OCI-LY7 (cell line): ENCODE measurements at regions of chr1 and their contacts with region 1.

Region 1: GRCh38 chr1:212035123-212035834 is at the starts of genes DTL and INTS7:
- DNase-seq: peak; percentile 100
- H3K4me3 ChIP-seq: peak within 1 kb of the TSS; percentile 82
- H3K27ac ChIP-seq: peak within 1 kb of the TSS; percentile 80
- H3K4me1 ChIP-seq: peaks cover 63% of the 10 kb centered on the region
- CTCF ChIP-seq: peak; percentile 90
- total RNA-seq, gene DTL: 64.4 and 71.5 TPM in 2 replicates
- total RNA-seq, gene INTS7: 16.7 and 17.8 TPM in 2 replicates

Region 2: DNA sequence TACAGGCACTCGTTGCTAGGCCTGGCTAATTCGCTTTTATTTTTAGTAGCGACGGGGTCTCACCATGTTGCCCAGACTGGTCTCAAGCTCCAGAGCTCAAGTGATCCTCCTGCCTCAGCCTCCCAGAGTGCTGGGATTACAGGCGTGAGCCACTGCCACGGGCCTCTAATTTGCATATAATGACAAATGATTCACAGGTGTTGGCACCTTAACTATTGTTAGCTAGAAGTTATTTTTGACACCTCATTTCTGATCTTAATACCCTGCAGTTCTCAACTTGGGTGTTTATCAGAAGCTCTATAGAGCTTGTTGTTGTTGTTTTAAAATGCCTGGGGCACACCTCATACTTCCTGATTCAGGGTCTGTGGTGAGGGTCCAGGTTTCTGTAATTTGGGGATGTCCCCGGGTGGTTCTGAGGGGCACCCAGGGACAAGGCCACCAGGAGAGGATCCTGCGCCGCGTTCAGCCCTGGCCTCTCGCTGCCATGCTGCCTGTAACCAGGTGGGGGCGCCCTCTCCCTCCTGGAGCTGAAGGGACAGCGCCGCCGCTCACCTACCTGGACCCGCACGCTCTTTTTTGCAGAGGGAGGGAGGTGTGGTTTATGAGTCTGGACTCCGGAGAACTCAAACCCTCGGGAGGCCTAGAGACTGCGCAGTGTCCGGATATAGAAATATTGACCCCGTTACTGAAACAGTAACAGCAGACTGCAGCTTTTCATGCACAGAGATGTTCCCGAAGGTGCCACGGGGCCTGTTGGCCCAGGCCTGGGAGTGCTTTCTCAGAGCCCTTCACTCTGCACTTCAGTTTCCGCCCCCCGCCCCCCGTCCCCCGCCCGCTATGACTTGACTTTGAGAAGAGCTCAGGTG is 336.9 kb before region 1 on chr1:
- CTCF ChIA-PET with region 1: interaction called, 9 read pairs
- POLR2A ChIA-PET with region 1: interaction called, 5 read pairs
- intact Hi-C with region 1: loop called (anchors 2 kb)
- DNase-seq: peak; percentile 75
- H3K4me3 ChIP-seq: peak overlapping the region; percentile 30
- H3K27ac ChIP-seq: peak overlapping the region; percentile 22
- H3K4me1 ChIP-seq: peaks cover 42% of the 10 kb centered on the region
- CTCF ChIP-seq: peak; percentile 99

Region 3: DNA sequence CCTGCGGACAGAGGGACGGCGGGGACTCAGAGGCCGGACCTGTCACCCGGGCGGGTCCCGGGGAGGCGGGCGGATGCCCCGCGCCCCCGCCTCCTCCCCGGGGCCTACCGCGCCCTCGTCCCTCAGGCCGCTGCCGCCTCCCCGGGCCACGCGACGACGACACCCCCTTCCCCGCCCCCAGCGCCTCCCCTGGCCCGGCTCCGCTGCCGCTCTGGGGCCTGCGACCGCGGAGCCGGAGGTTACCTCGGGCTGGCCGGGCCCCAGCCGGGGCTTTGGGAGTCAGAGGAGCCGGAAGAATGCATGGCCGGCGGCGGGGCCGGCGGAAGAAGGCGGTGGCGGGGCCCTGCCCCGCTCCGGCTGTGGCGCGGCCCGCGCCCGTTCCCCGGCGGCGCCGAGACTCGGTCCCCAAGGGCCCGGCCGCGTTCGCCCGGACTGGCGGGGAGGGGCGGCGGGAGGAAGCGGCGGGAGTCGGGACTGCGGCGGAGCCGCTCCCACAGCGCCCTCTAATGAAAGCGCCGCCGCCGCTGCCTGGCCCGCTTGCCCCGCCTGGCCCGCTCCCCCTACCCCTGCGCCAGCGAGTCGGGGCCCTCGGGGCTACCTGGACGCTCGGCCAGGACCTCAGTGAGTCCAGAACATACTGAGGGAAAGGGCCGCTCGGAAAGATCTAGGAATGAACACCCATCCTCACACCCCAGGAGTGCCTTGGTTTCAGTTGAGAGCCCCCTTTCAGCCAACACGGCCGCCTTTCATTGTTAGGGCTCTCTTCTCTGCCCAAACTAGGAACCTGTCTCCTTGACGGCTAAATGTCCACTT is 204.7 kb before region 1 on chr1 and contains the start of gene LPGAT1:
- CTCF ChIA-PET with region 1: no interaction called
- POLR2A ChIA-PET with region 1: interaction called, 4 read pairs
- intact Hi-C with region 1: loop called (anchors 2 kb)
- DNase-seq: peak; percentile 81
- H3K4me3 ChIP-seq: peak within 1 kb of the TSS; percentile 77
- H3K27ac ChIP-seq: peak within 1 kb of the TSS; percentile 48
- H3K4me1 ChIP-seq: peaks cover 32% of the 10 kb centered on the region
- CTCF ChIP-seq: peak; percentile 75
- total RNA-seq, gene LPGAT1: 14.1 and 18.7 TPM in 2 replicates

Region 4: DNA sequence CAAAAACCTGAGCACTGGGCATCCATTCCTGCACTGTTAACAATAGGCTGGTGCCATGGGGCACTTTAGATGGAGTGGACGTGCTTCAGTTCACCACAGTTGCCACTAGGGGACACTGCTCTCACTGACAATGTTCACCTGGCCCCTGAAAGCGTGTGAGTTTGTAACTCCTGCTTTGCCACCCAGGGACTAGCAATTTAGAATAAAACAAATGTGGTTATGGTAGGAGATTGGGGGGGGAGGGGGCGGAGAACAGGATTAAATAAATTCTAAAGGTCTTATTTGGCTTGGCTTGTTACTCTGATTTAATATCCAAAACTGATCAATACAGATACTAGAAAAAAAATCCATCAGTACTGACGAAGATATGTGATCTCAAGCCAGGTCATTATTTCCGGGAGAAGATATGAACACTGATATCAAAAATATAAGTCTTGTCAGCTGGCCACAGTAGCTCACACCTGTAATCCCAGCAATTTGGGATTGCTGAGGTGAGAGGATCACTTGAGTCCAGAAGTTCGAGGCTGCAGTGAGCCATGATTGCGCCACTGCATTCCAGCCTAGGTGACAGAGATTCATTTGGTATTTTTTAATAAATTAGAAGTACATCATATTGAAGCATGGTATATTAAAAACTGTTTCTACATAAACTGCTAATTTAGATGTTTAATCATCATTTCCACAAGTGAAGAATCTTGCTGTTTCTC is 23.1 kb before region 1 on chr1:
- CTCF ChIA-PET with region 1: interaction called, 3 read pairs
- POLR2A ChIA-PET with region 1: interaction called, 6 read pairs
- intact Hi-C with region 1: loop called (anchors 1 kb)
- DNase-seq: peak; percentile 74
- H3K4me3 ChIP-seq: no peak overlapping the region
- H3K27ac ChIP-seq: no peak overlapping the region
- H3K4me1 ChIP-seq: no peaks in the 10 kb centered on the region
- CTCF ChIP-seq: peak; percentile 94

Region 5: DNA sequence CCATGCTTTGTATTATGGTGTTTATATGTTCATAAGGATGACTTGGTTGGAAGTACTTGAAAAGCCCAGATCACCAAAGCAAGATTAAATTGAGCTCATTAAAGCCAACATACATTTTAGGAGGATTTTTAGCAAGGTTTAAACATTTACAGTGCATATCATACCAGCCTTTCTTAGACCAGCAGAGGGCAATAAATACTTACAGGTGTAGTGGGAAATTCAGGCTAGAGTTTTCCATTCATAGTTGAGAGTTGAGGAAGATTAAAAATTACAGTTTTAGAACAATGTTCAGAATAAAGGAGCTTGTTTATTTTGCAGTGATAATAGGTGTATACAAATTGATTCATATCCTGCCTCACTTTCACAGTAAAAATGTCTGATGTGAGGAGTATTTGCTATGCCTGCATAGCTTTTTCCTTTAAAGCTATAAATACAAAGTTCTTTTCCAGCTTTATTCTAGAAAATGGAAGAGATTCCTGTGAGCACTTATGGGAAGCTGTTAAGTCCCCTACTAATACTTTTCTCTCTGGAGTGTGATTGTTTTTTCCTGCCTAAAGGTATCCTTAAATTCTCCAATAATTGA is 35.5 kb after region 1 on chr1:
- CTCF ChIA-PET with region 1: interaction called, 3 read pairs
- POLR2A ChIA-PET with region 1: interaction called, 10 read pairs
- intact Hi-C with region 1: no loop called
- DNase-seq: peak; percentile 31
- H3K4me3 ChIP-seq: no peak overlapping the region
- H3K27ac ChIP-seq: no peak overlapping the region
- H3K4me1 ChIP-seq: no peaks in the 10 kb centered on the region
- CTCF ChIP-seq: peak; percentile 76